ENCODE measurements at regions of chr10 and their contacts with region 1.

Region 1: DNA sequence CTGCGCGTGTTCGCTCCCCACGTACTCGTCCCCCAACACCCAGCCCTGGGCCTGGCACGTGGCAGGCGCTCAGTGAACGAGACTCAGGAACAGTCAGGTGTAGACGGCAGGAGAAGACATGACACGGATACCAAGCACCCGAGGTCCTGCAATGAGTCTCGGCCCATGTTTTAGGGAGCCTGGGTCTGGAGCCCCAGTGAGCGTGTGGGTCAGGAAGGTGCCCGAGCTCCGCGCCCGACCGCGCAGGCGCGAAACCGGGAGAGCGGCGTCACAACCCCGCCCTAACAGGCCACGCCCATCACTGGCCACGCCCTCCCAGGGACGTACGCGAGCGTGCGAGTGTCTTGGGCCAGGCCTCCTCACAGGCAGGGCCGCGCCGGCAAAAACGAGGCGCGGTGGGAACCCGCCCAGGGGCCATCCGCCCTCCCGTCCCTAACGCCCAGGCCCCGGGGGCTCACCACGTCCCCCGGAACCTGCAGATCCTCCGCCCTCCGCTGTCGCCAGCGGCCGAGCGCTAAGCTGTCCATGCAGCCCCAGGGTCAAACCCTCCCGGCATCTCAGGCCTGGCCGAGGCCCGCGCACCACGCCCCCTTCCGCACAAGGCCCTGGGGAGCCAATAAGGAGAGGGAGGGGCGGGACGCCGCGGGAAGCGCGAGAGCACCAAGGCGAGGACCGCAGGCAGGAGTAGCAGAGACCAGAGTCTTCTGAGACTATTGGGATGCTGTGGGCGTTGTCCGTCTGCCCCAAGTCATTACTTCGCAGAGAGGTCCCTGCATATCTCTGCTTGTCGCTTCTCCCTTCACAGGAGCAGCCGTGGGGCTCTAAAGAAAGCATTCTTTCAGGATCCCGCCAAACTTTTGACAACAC is at the start of gene C10orf143:
- DNase-seq: peak; percentile 93 to 95 (median 95)
- ATAC-seq: peak; percentile 94
- H3K4me3 ChIP-seq: peak within 1 kb of the TSS; percentile 68
- H3K27ac ChIP-seq: peak within 1 kb of the TSS; percentile 84
- H3K4me1 ChIP-seq: peaks cover 3 to 24% of the 10 kb centered on the region in 2 experiments; a peak in 3 of 5 replicates
- H3K27me3 ChIP-seq: no peaks in the 10 kb centered on the region
- CTCF ChIP-seq: no peak
- EP300 ChIP-seq: no peak; the same call in 1 of the 2 replicates
- POLR2A ChIP-seq: peak; percentile 94
- RAD21 ChIP-seq: no peak
- polyA plus RNA-seq, gene C10orf143: 0.07 TPM in 1 of 2 experiments, not detected in the other

Region 2: GRCh38 chr10:129888784-129889616 is 221.5 kb before region 1 on chr10:
- CTCF ChIA-PET with region 1: no interaction called
- POLR2A ChIA-PET with region 1: no interaction called
- in situ Hi-C with region 1: no loop called
- intact Hi-C with region 1: no loop called
- DNase-seq: peak; percentile 30 to 51 (median 46)
- ATAC-seq: peak; percentile 91
- H3K4me3 ChIP-seq: no peak overlapping the region
- H3K27ac ChIP-seq: no peak overlapping the region
- H3K4me1 ChIP-seq: no peaks in the 10 kb centered on the region
- H3K27me3 ChIP-seq: peaks cover 2 to 46% of the 10 kb centered on the region in 2 experiments; a peak in 4 of 5 replicates
- CTCF ChIP-seq: peak; percentile 37 to 53 (median 50)
- EP300 ChIP-seq: no peak
- POLR2A ChIP-seq: no peak
- RAD21 ChIP-seq: 0 out of 4 replicates have a peak, but pooled peaks of 1 of the 2 experiments have one; percentile 18

Region 3: DNA sequence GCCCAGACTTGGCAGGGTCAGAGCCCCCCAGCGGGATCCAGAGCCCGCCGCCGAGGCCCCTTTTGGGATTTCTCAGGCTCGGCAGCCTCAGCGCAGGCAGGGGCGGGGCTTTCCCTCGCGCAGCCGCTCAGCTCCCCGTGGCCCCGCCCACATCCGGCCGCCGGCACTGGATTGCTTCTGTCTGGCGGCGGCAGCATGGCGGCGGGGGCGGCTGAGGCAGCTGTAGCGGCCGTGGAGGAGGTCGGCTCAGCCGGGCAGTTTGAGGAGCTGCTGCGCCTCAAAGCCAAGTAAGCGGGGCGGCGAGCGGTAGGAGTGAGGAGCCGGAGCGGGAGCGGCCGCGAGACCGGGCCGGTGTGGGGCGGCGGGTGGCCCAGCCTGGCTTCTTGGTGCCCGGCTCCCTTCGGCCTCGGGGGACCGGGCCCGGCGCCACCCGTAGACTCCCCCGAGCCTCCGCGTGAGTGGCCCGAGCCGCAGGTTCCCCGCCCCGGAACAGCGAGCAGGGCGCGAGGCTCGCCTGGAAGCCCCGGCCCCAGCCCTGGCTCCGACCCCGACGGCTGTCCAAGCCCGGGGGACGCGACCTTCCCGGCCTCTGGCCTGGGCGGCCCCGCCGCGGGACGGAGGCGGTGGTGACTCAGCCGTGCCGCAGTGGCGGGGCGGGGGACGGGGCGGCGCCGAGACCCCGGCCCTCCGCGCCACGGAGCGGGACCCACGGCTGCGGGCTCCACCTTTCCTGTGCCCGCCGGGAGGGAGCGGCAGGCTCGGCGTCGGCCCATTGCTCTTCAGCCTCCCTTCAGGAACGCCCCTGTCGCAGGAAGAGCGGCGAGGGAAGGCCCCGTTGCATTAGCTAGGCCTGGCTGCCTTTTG is 26.0 kb after region 1 on chr10 and contains the start of gene GLRX3:
- CTCF ChIA-PET with region 1: no interaction called
- POLR2A ChIA-PET with region 1: interaction called, 3 read pairs
- in situ Hi-C with region 1: no loop called
- intact Hi-C with region 1: loop called (anchors 1 kb)
- DNase-seq: peak; percentile 86 to 90 (median 88)
- ATAC-seq: peak; percentile 88
- H3K4me3 ChIP-seq: peak within 1 kb of the TSS; percentile 82
- H3K27ac ChIP-seq: peak within 1 kb of the TSS; percentile 83
- H3K4me1 ChIP-seq: peaks cover 8 to 19% of the 10 kb centered on the region in 2 experiments
- H3K27me3 ChIP-seq: no peaks in the 10 kb centered on the region
- CTCF ChIP-seq: no peak
- EP300 ChIP-seq: no peak
- POLR2A ChIP-seq: peak; percentile 81
- RAD21 ChIP-seq: no peak
- polyA plus RNA-seq, gene GLRX3: 150 to 176 TPM

Region 4: DNA sequence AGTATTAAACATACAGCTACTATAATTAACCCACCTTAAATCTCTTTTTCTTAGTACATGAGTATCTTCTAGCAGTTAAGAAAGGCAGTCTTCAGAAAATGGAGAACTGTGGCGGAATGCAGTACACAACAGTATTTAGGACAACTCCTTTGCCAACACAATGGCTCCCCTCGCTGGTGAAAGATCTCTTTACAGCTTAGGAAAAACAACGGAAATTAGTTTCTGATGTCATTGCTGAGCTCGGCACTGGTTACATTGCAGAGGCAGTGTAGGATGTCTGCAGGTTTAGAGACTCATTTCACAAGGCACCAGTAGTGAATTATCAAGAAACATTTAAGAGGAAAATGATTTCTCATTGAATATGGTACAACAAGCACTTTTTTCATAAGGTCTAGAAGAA is 69.2 kb after region 1 on chr10:
- CTCF ChIA-PET with region 1: no interaction called
- POLR2A ChIA-PET with region 1: no interaction called
- in situ Hi-C with region 1: no loop called
- intact Hi-C with region 1: loop called (anchors 10 kb)
- DNase-seq: peak in 3 of 4 experiments; percentile 21 to 46 (median 25)
- ATAC-seq: peak; percentile 85
- H3K4me3 ChIP-seq: no peak overlapping the region
- H3K27ac ChIP-seq: no peak overlapping the region
- H3K4me1 ChIP-seq: no peaks in the 10 kb centered on the region
- H3K27me3 ChIP-seq: no peaks in the 10 kb centered on the region
- CTCF ChIP-seq: peak; percentile 32 to 52 (median 45); a peak in 4 of 6 replicates
- EP300 ChIP-seq: no peak
- POLR2A ChIP-seq: no peak
- RAD21 ChIP-seq: peak; percentile 12 to 62; a peak in 2 of 4 replicates